Dorsolateral prefrontal cortex (tissue), 120 donors: ENCODE measurements at regions of chr14 and their contacts with region 1.

Region 1: GRCh38 chr14:56543436-56543835 is 36.2 kb upstream of the TMEM260 start:
- DNase-seq: no peak
- H3K4me3 ChIP-seq: no peak overlapping the region
- H3K27ac ChIP-seq: no peak overlapping the region
- H3K27me3 ChIP-seq: peaks cover 0 to 3% (median 0%) of the 10 kb centered on the region in 45 donors
- CTCF ChIP-seq: no peak

Region 2: DNA sequence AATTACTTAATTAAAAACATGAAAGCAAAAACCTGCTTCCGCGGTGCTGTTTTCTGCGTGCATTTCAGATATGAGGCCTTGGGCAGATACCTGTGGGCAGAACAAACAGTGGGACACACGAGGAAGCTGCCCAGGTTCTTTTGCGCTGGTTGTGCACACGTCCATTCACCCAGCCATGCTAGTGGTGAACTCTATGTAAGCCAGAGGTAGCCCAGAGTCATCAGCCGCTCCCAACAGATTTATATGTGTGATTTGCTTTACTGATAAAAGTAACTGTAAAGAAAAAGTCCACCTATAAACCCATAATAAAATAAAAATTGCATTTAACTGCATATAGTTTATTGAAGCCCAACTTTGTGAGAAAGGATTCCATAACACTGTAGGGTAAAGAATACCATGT is 10.9 kb before region 1 on chr14:
- intact Hi-C with region 1: loop called in 1 of 2 experiments (anchors 1 kb)
- DNase-seq: no peak
- H3K4me3 ChIP-seq: no peak overlapping the region
- H3K27ac ChIP-seq: no peak overlapping the region
- H3K27me3 ChIP-seq: peaks cover 0 to 10% (median 0%) of the 10 kb centered on the region in 45 donors
- CTCF ChIP-seq: no peak